HepG2 (cell line): ENCODE measurements at regions of chr12 and their contacts with region 1.

Region 1: GRCh38 chr12:100437038-100437841 is 36.4 kb upstream of the NR1H4 start:
- DNase-seq: peak; percentile 97
- ATAC-seq: peak; percentile 95
- H3K4me3 ChIP-seq: peak overlapping the region in 1 of 3 experiments; percentile 14; a peak in 1 of 6 replicates
- H3K27ac ChIP-seq: peak overlapping the region; percentile 81
- H3K4me1 ChIP-seq: peaks cover 67% of the 10 kb centered on the region
- H3K27me3 ChIP-seq: no peaks in the 10 kb centered on the region; a peak in 1 of 5 replicates
- CTCF ChIP-seq: no peak
- EP300 ChIP-seq: peak; percentile 93 to 100
- POLR2A ChIP-seq: no peak
- RAD21 ChIP-seq: peak; percentile 25; the same call in 1 of the 2 replicates

Region 2: GRCh38 chr12:100114574-100114973 is 322.7 kb before region 1 on chr12:
- CTCF ChIA-PET with region 1: no interaction called
- POLR2A ChIA-PET with region 1: no interaction called
- in situ Hi-C with region 1: no loop called
- intact Hi-C with region 1: no loop called
- DNase-seq: no peak
- ATAC-seq: no peak
- H3K4me3 ChIP-seq: no peak overlapping the region
- H3K27ac ChIP-seq: no peak overlapping the region
- H3K4me1 ChIP-seq: no peaks in the 10 kb centered on the region
- H3K27me3 ChIP-seq: no peaks in the 10 kb centered on the region
- CTCF ChIP-seq: no peak
- EP300 ChIP-seq: no peak
- POLR2A ChIP-seq: no peak
- RAD21 ChIP-seq: no peak

Region 3: DNA sequence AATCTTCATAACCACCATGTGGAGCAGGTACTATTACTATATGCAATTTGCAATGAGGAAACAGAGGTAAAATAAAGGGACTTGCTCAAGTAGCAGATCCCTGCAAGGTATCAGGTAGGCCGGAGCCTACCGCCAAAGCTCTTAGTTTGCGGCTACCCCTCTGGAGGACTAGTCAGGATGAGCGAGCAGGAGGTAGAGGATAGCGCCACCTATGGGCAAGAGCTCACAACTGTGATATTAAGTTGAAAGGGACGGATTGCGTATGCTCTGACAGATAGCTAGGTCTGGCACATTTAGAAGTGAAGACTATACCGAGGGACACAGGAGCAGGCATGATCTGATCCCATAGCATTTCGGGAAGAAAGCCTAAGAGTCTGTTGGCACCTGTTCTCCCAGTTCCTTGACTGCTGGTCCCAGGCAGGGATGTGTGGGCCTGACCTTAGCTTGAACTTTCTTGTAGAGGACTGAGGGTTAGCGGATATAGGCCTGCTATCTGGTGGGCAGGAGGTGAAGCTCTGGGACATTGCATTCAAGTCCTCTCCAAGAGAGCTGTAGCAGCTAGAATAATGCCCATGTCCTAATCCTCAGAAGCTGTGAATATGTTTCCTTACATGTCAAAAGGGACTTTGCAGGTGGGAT is 32.4 kb before region 1 on chr12:
- CTCF ChIA-PET with region 1: no interaction called
- POLR2A ChIA-PET with region 1: interaction called, 6 read pairs
- in situ Hi-C with region 1: no loop called
- intact Hi-C with region 1: loop called (anchors 2 kb)
- DNase-seq: peak; percentile 76
- ATAC-seq: peak; percentile 98
- H3K4me3 ChIP-seq: peak overlapping the region in 1 of 3 experiments; percentile 34; a peak in 2 of 6 replicates
- H3K27ac ChIP-seq: no peak overlapping the region
- H3K4me1 ChIP-seq: peaks cover 26% of the 10 kb centered on the region
- H3K27me3 ChIP-seq: no peaks in the 10 kb centered on the region
- CTCF ChIP-seq: peak; percentile 91
- EP300 ChIP-seq: no peak
- POLR2A ChIP-seq: no peak
- RAD21 ChIP-seq: peak; percentile 71

Region 4: GRCh38 chr12:100427078-100427477 is 10.2 kb before region 1 on chr12:
- CTCF ChIA-PET with region 1: no interaction called
- POLR2A ChIA-PET with region 1: interaction called, 5 read pairs
- in situ Hi-C with region 1: no loop called
- intact Hi-C with region 1: loop called (anchors 1 kb)
- DNase-seq: peak; percentile 44
- ATAC-seq: peak; percentile 83
- H3K4me3 ChIP-seq: no peak overlapping the region
- H3K27ac ChIP-seq: no peak overlapping the region
- H3K4me1 ChIP-seq: peaks cover 26% of the 10 kb centered on the region
- H3K27me3 ChIP-seq: no peaks in the 10 kb centered on the region
- CTCF ChIP-seq: no peak
- EP300 ChIP-seq: no peak
- POLR2A ChIP-seq: no peak
- RAD21 ChIP-seq: no peak

Region 5: DNA sequence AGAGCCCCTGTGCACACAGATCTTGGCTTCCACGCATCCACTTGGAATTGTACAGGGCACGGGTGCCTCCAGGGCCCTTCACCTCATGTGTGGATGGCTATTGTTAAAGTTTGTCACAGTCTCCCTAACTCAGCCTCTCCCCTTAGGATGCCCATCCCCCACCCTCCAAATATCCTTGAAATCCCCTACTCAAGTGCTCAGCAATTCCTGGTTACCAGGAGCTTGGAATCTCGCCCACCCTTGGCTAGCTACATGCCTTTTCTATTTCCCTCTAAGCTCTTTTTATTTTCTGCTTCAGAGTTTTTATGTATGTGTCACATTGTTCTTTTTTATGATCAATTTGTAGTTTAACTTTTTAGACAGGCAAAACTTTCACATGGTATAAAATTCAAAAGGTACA is 23.5 kb after region 1 on chr12:
- CTCF ChIA-PET with region 1: no interaction called
- POLR2A ChIA-PET with region 1: interaction called, 12 read pairs
- in situ Hi-C with region 1: no loop called
- intact Hi-C with region 1: no loop called
- DNase-seq: no peak
- ATAC-seq: no peak
- H3K4me3 ChIP-seq: no peak overlapping the region
- H3K27ac ChIP-seq: no peak overlapping the region
- H3K4me1 ChIP-seq: peaks cover 43% of the 10 kb centered on the region
- H3K27me3 ChIP-seq: no peaks in the 10 kb centered on the region
- CTCF ChIP-seq: no peak
- EP300 ChIP-seq: no peak
- POLR2A ChIP-seq: no peak
- RAD21 ChIP-seq: no peak

Region 6: DNA sequence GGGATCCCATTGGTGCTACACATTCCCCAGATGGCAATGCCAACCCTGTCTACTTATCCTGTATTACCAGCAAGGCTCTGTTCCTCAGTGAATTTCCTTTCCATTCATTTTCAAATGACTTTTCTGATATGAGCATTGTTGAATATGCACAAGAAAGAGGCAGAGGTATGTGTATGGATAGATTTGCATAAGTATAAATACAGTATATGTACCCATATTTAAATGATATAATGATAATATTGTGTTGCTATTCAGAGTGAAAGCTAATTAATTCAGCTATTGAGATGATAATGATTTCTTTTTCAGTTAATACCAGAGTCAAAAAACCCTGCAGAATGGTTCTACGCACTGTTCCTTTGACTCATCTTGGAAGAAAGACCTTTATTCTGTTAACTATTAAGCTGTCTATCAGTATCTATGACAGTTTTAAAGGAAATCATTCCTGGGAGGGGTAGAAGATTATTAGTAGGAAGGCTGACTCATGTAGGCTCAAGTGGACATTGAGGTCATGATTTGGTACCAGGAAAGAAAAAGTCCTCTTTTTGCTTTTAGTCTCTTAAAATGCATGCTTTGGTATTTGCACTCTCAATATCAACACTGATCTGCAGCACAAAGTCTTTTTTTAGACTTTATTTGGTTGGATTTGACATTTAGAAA is 91.4 kb after region 1 on chr12:
- CTCF ChIA-PET with region 1: no interaction called
- POLR2A ChIA-PET with region 1: no interaction called
- in situ Hi-C with region 1: no loop called
- intact Hi-C with region 1: no loop called
- DNase-seq: no peak
- ATAC-seq: no peak
- H3K4me3 ChIP-seq: no peak overlapping the region
- H3K27ac ChIP-seq: no peak overlapping the region
- H3K4me1 ChIP-seq: no peaks in the 10 kb centered on the region
- H3K27me3 ChIP-seq: no peaks in the 10 kb centered on the region
- CTCF ChIP-seq: no peak
- EP300 ChIP-seq: no peak
- POLR2A ChIP-seq: no peak
- RAD21 ChIP-seq: no peak

Region 7: GRCh38 chr12:101086490-101087135 is 649.4 kb after region 1 on chr12:
- CTCF ChIA-PET with region 1: no interaction called
- POLR2A ChIA-PET with region 1: no interaction called
- in situ Hi-C with region 1: no loop called
- intact Hi-C with region 1: no loop called
- DNase-seq: no peak
- ATAC-seq: no peak
- H3K4me3 ChIP-seq: no peak overlapping the region
- H3K27ac ChIP-seq: no peak overlapping the region
- H3K4me1 ChIP-seq: no peaks in the 10 kb centered on the region
- H3K27me3 ChIP-seq: peaks cover 0 to 10% of the 10 kb centered on the region in 2 experiments; a peak in 1 of 5 replicates
- CTCF ChIP-seq: no peak
- EP300 ChIP-seq: no peak
- POLR2A ChIP-seq: no peak
- RAD21 ChIP-seq: no peak